Mammary epithelial cell (primary cell): ENCODE measurements at regions of chr14 and their contacts with region 1.

Region 1: DNA sequence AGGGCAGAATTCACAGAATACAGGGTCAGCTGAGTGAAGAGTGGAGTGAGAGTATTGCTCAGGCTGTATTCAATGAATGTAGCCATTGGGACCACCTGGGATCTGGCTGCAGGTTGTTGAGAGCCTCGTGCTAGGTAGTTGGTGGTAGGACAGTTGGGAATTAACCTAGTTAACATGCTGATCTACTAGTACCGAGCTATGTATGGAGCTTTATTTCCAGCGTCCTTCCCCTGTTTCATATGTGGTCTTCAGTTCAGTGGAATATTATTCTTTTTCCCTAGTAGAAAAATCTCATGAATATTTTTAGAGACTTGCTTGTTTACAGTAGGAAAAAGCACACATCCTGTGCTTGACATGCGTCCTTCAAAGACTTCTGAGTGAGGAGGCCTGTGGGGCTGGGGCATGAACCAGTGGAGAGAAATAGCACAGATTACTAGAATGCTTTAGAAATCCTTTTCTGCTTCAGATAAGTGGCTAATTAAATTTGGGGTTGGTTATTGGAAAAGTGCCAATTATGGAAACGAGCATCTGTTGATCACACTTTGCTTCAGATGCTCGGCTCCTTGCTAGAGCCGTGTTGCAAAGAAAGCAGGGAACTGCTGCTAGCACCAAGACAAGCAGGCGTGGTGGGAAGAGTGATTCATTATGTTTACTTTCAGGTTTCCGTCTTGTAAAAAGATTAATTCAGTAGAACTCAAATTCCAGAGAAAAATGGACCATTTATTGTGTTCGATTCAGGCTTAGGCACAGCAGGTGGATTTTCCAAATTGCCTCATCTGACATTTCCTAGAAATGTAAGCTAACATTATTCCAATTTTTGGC is 53.6 kb downstream of the ARF6 start:
- DNase-seq: peak; percentile 72
- H3K4me3 ChIP-seq: no peak overlapping the region
- H3K27ac ChIP-seq: no peak overlapping the region
- H3K4me1 ChIP-seq: peaks cover 30% of the 10 kb centered on the region
- H3K27me3 ChIP-seq: no peaks in the 10 kb centered on the region
- CTCF ChIP-seq: no peak

Region 2: DNA sequence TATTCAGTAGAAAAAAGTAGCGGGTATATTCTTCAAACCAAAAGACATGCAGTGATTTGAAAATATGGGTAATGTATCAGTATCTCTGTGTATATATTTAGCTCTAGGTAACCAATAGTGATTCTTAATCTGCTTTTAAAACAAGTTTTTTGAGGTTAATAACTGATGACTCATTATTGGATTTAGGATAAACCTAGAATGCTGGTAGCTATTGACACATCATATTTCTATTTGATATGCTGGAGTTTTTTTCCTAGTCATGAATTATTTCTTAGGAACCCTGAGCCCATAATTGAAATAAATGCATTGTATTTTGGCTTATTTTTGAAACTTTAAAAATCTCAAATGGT is 38.1 kb before region 1 on chr14:
- CTCF ChIA-PET with region 1: no interaction called
- dilution Hi-C with region 1: loop called (anchors 5 kb)
- in situ Hi-C with region 1: no loop called
- intact Hi-C with region 1: loop called (anchors 1 kb)
- DNase-seq: peak; percentile 65
- H3K4me3 ChIP-seq: no peak overlapping the region
- H3K27ac ChIP-seq: peak overlapping the region; percentile 94
- H3K4me1 ChIP-seq: peaks cover 34% of the 10 kb centered on the region
- H3K27me3 ChIP-seq: no peaks in the 10 kb centered on the region
- CTCF ChIP-seq: no peak

Region 3: DNA sequence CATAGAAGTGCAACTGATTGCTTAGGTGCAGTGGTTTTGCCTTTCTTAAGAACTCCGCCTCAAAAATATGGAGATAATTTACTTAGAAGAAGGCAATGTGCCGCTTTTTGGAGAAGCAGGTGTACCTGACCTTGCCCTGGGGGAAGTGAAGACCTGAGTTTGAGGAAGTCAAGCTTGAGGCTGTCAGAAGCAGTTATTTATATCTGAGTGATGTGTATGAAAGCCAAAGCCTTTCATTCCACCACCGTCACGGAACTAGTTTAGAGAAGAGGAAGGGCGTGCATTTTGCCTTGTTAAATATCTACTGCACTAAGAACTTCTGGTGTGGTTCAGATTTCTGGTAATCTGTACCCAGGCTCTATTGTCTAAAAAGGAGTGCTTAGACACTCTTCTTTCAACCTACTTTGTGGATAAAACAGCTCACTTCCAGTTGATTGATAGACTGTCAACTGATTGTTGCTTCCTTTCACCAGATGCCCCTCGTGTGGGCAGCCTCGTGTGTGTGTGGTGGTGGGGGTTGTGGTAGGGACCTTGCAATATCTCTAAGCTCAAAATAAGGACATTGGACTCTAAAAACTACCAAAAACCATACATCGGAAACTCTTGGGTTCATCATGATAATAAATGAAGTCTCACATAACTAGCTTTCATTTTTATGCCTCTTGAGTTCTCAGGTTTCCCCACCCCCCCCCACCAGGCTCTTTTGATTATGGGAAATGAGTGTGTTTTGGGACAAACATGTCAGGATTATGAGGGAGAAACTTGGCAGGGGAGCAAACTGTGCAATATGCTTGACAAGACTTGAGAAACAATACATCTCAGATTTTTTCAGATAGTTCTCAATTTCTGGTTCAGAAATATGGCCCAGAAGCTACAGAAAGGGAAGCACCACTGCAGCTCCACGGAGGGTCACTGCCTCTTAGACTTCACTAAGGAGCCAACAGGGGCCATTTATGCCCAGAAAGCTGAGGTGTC is 24.9 kb after region 1 on chr14:
- CTCF ChIA-PET with region 1: no interaction called
- dilution Hi-C with region 1: no loop called
- in situ Hi-C with region 1: no loop called
- intact Hi-C with region 1: loop called (anchors 1 kb)
- DNase-seq: no peak
- H3K4me3 ChIP-seq: no peak overlapping the region
- H3K27ac ChIP-seq: peak overlapping the region; percentile 90
- H3K4me1 ChIP-seq: peaks cover 70% of the 10 kb centered on the region
- H3K27me3 ChIP-seq: no peaks in the 10 kb centered on the region
- CTCF ChIP-seq: no peak

Region 4: DNA sequence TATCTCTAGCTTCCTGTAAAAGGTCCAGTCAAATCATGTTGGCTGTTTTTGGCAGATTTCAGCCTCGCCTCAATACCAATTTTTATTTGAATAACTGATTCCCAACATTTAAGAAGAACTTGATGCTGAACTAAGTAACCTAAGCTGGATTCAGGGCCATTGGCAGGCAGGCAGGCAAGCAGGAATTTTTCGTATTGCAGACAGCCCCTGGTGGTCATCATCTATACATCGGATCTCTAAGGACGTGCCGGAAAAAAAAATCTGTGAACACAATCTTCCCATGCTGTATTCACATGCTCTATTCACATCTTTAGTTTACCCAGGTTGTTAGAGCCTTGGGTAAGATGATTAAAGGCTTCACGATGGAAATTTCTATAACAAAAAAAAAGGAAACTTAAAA is 162.8 kb after region 1 on chr14:
- CTCF ChIA-PET with region 1: no interaction called
- dilution Hi-C with region 1: no loop called
- in situ Hi-C with region 1: no loop called
- intact Hi-C with region 1: loop called (anchors 5 kb)
- DNase-seq: no peak
- H3K4me3 ChIP-seq: no peak overlapping the region
- H3K27ac ChIP-seq: no peak overlapping the region
- H3K4me1 ChIP-seq: peaks cover under 1% of the 10 kb centered on the region
- H3K27me3 ChIP-seq: no peaks in the 10 kb centered on the region
- CTCF ChIP-seq: peak; percentile 16 to 19